H1 (cell line): ENCODE measurements at regions of chr19 and their contacts with region 1.

Region 1: GRCh38 chr19:40381321-40381720 is 8.7 kb downstream of the HIPK4 start:
- DNase-seq: no peak
- H3K4me3 ChIP-seq: no peak overlapping the region
- H3K27ac ChIP-seq: no peak overlapping the region
- H3K4me1 ChIP-seq: peaks cover 0 to 4% (median 0%) of the 10 kb centered on the region in 4 experiments; a peak in 2 of 7 replicates
- H3K27me3 ChIP-seq: no peaks in the 10 kb centered on the region
- CTCF ChIP-seq: peak; percentile 15 to 50 (median 29)
- EP300 ChIP-seq: no peak
- POLR2A ChIP-seq: no peak
- RAD21 ChIP-seq: peak; percentile 11 to 44; a peak in 2 of 4 replicates

Region 2: GRCh38 chr19:40257057-40257517 is 124.2 kb before region 1 on chr19:
- CTCF ChIA-PET with region 1: no interaction called
- POLR2A ChIA-PET with region 1: no interaction called
- DNase-seq: no peak
- H3K4me3 ChIP-seq: no peak overlapping the region
- H3K27ac ChIP-seq: no peak overlapping the region
- H3K4me1 ChIP-seq: peaks cover 0 to 5% (median 3%) of the 10 kb centered on the region in 4 experiments; a peak in 4 of 7 replicates
- H3K27me3 ChIP-seq: no peaks in the 10 kb centered on the region
- CTCF ChIP-seq: no peak
- EP300 ChIP-seq: no peak
- POLR2A ChIP-seq: no peak
- RAD21 ChIP-seq: no peak

Region 3: GRCh38 chr19:40365613-40366401 is 15.5 kb before region 1 on chr19:
- CTCF ChIA-PET with region 1: interaction called, 19 read pairs
- POLR2A ChIA-PET with region 1: interaction called, 25 read pairs
- DNase-seq: peak; percentile 70 to 86
- H3K4me3 ChIP-seq: peak overlapping the region; percentile 58 to 76 (median 60)
- H3K27ac ChIP-seq: 0 out of 2 replicates have a peak overlapping the region, but pooled peaks have one; percentile 5
- H3K4me1 ChIP-seq: peaks cover 0 to 16% (median 10%) of the 10 kb centered on the region in 4 experiments; a peak in 6 of 7 replicates
- H3K27me3 ChIP-seq: no peaks in the 10 kb centered on the region
- CTCF ChIP-seq: no peak
- EP300 ChIP-seq: no peak
- POLR2A ChIP-seq: no peak; a peak in 1 of 3 replicates
- RAD21 ChIP-seq: no peak

Region 4: DNA sequence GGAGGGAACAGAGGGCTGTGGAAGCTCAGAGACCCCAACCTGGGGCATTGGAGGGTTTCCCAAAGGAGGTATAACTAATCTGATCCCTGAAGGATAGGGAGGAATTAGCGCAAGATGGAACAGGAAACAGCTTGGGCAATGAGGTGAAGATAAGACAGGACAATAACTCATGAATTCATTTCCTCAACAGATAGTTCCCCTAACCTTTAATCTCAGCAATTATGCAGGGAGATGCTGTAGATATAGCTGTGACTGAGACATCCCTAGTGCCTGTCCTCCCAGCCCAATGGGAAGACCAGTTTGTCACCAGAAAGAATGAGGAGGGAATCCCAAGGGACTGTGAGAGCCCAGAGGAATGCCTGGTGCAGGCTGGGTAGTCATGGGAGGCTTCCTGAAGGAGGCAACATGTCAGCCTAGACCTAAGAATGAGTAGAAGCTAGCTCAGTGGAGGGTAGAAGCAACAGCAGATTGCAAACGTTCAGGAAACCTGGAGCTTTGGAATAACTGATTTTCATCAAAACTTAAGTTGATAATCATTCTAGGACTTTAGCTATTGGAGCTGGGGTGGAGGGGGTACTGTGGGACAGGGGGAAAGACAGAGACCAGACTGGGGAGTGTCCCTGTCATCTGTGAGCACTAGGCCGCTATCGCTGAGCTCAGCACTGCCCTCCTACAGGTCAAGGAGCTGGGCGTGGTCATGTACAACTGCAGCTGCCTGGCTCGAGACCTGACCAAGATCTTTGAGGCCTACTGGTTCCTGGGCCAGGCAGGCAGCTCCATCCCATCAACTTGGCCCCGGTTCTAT is 10.1 kb before region 1 on chr19:
- CTCF ChIA-PET with region 1: interaction called, 19 read pairs
- POLR2A ChIA-PET with region 1: interaction called, 25 read pairs
- DNase-seq: no peak
- H3K4me3 ChIP-seq: no peak overlapping the region
- H3K27ac ChIP-seq: no peak overlapping the region
- H3K4me1 ChIP-seq: peaks cover 0 to 12% (median 8%) of the 10 kb centered on the region in 4 experiments; a peak in 6 of 7 replicates
- H3K27me3 ChIP-seq: no peaks in the 10 kb centered on the region
- CTCF ChIP-seq: no peak
- EP300 ChIP-seq: no peak
- POLR2A ChIP-seq: no peak
- RAD21 ChIP-seq: no peak

Region 5: GRCh38 chr19:40395591-40396355 is 14.5 kb after region 1 on chr19:
- CTCF ChIA-PET with region 1: interaction called, 7 read pairs
- POLR2A ChIA-PET with region 1: interaction called, 12 read pairs
- DNase-seq: no peak
- H3K4me3 ChIP-seq: no peak overlapping the region
- H3K27ac ChIP-seq: no peak overlapping the region
- H3K4me1 ChIP-seq: peaks cover 0 to 5% (median 4%) of the 10 kb centered on the region in 4 experiments; a peak in 5 of 7 replicates
- H3K27me3 ChIP-seq: peaks cover 0 to 8% (median 5%) of the 10 kb centered on the region in 4 experiments; a peak in 6 of 7 replicates
- CTCF ChIP-seq: no peak
- EP300 ChIP-seq: no peak
- POLR2A ChIP-seq: no peak
- RAD21 ChIP-seq: no peak